CD14-positive monocyte (primary cell): ENCODE measurements at regions of chr2 and their contacts with region 1.

Region 1: GRCh38 chr2:102235491-102235890 is 48.7 kb downstream of the IL1RL2 start:
- DNase-seq: peak in 2 of 3 donors; percentile 48 to 65
- H3K4me3 ChIP-seq: no peak overlapping the region
- H3K4me3 Mint-ChIP-seq: no peak overlapping the region
- H3K27ac ChIP-seq: no peak overlapping the region
- H3K27ac Mint-ChIP-seq: peak overlapping the region in 3 of 7 donors; percentile 61 to 85 (median 72)
- H3K4me1 ChIP-seq: peaks cover 15 to 20% of the 10 kb centered on the region in 2 donors
- H3K4me1 Mint-ChIP-seq: peaks cover 31% of the 10 kb centered on the region
- H3K27me3 ChIP-seq: peaks cover 3 to 14% of the 10 kb centered on the region in 2 donors
- H3K27me3 Mint-ChIP-seq: peaks cover 28 to 41% (median 39%) of the 10 kb centered on the region in 3 donors
- CTCF ChIP-seq: peak; percentile 66

Region 2: GRCh38 chr2:101597351-101597944 is 638.0 kb before region 1 on chr2:
- intact Hi-C with region 1: no loop called
- DNase-seq: no peak
- H3K4me3 ChIP-seq: no peak overlapping the region
- H3K4me3 Mint-ChIP-seq: peak overlapping the region in 1 of 2 donors; percentile 59
- H3K27ac ChIP-seq: no peak overlapping the region
- H3K27ac Mint-ChIP-seq: no peak overlapping the region
- H3K4me1 ChIP-seq: no peaks in the 10 kb centered on the region
- H3K4me1 Mint-ChIP-seq: no peaks in the 10 kb centered on the region
- H3K27me3 ChIP-seq: no peaks in the 10 kb centered on the region
- H3K27me3 Mint-ChIP-seq: peaks cover 4 to 6% (median 6%) of the 10 kb centered on the region in 3 donors
- CTCF ChIP-seq: no peak

Region 3: DNA sequence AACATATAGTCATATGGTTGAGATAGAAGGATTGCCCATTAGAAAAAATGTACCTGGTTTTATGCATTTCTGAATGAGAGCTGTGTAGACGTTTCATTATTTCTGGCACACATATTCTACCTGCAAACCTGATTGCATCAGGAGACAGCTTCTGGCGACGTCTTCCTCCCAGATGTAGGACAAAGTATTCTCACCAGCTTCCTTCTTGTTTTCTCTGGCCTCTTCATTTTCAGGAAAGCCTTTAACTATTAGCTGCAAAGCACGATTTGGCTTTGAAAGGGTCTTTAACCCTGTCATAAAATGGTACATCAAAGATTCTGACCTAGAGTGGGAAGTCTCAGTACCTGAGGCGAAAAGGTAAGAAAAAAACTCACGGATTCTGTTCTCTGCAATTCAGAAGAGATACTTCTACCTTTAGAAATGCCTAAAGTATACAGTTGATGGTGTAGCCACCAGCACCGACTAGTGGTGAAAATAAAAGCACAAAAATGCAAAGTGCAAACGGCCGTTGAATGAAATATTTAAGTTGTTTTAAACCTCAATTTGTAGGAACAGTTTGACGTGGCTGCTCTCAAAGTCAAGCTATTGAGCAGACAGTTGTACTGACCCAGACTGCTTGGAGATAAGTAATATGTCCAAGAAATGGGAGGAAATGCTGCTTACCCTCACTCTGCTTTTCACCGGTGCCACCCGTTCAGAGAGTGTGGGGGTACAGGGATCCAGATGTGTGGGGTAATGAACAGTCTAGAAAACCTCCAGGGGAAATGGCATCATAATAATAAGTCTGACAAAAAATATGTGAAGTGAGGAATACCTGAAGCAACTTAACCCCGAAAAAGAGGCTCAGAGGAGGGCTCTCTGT is 207.7 kb after region 1 on chr2:
- intact Hi-C with region 1: loop called in 1 of 2 experiments (anchors 5 kb)
- DNase-seq: peak; percentile 18 to 48 (median 29)
- H3K4me3 ChIP-seq: no peak overlapping the region
- H3K4me3 Mint-ChIP-seq: peak overlapping the region in 1 of 2 donors; percentile 51
- H3K27ac ChIP-seq: no peak overlapping the region
- H3K27ac Mint-ChIP-seq: no peak overlapping the region
- H3K4me1 ChIP-seq: peaks cover 4 to 6% of the 10 kb centered on the region in 2 donors
- H3K4me1 Mint-ChIP-seq: peaks cover 5% of the 10 kb centered on the region
- H3K27me3 ChIP-seq: peaks cover 0 to 3% of the 10 kb centered on the region in 2 donors
- H3K27me3 Mint-ChIP-seq: peaks cover 0 to 3% (median 1%) of the 10 kb centered on the region in 3 donors
- CTCF ChIP-seq: peak; percentile 82

Region 4: GRCh38 chr2:102449370-102449974 is 214.0 kb after region 1 on chr2:
- intact Hi-C with region 1: loop called (anchors 5 kb)
- DNase-seq: peak; percentile 19 to 52 (median 40)
- H3K4me3 ChIP-seq: no peak overlapping the region
- H3K4me3 Mint-ChIP-seq: no peak overlapping the region
- H3K27ac ChIP-seq: no peak overlapping the region
- H3K27ac Mint-ChIP-seq: no peak overlapping the region
- H3K4me1 ChIP-seq: no peaks in the 10 kb centered on the region
- H3K4me1 Mint-ChIP-seq: no peaks in the 10 kb centered on the region
- H3K27me3 ChIP-seq: no peaks in the 10 kb centered on the region
- H3K27me3 Mint-ChIP-seq: peaks cover 2 to 5% (median 3%) of the 10 kb centered on the region in 3 donors
- CTCF ChIP-seq: peak; percentile 81